Mucosa of descending colon (tissue), 3 donors: ENCODE measurements at regions of chr1 and their contacts with region 1.

Region 1: GRCh38 chr1:25796811-25797458 is 3.1 kb upstream of the SELENON start:
- DNase-seq: peak; percentile 87 to 96 (median 92)
- ATAC-seq: peak; percentile 76
- H3K4me3 ChIP-seq: no peak overlapping the region
- H3K4me1 ChIP-seq: no peaks in the 10 kb centered on the region
- CTCF ChIP-seq: peak; percentile 62

Region 2: GRCh38 chr1:25216123-25216522 is 580.8 kb before region 1 on chr1:
- intact Hi-C with region 1: no loop called
- DNase-seq: no peak
- ATAC-seq: no peak
- H3K4me3 ChIP-seq: no peak overlapping the region
- H3K4me1 ChIP-seq: peaks cover 2% of the 10 kb centered on the region
- CTCF ChIP-seq: no peak

Region 3: GRCh38 chr1:25608488-25609178 is 188.3 kb before region 1 on chr1:
- intact Hi-C with region 1: loop called (anchors 5 to 10 kb)
- DNase-seq: peak; percentile 86 to 94 (median 86)
- ATAC-seq: peak; percentile 96
- H3K4me3 ChIP-seq: no peak overlapping the region
- H3K4me1 ChIP-seq: no peaks in the 10 kb centered on the region
- CTCF ChIP-seq: peak; percentile 59

Region 4: GRCh38 chr1:25616095-25616986 is 180.6 kb before region 1 on chr1 and contains the start of gene MAN1C1:
- intact Hi-C with region 1: loop called in 1 of 2 experiments (anchors 10 kb)
- DNase-seq: peak; percentile 82 to 89 (median 89)
- ATAC-seq: peak; percentile 93
- H3K4me3 ChIP-seq: peak within 1 kb of the TSS; percentile 36
- H3K4me1 ChIP-seq: peaks cover 17% of the 10 kb centered on the region
- CTCF ChIP-seq: peak; percentile 16
- total RNA-seq, gene MAN1C1: 2.5 to 22.0 (median 6.1) TPM

Region 5: DNA sequence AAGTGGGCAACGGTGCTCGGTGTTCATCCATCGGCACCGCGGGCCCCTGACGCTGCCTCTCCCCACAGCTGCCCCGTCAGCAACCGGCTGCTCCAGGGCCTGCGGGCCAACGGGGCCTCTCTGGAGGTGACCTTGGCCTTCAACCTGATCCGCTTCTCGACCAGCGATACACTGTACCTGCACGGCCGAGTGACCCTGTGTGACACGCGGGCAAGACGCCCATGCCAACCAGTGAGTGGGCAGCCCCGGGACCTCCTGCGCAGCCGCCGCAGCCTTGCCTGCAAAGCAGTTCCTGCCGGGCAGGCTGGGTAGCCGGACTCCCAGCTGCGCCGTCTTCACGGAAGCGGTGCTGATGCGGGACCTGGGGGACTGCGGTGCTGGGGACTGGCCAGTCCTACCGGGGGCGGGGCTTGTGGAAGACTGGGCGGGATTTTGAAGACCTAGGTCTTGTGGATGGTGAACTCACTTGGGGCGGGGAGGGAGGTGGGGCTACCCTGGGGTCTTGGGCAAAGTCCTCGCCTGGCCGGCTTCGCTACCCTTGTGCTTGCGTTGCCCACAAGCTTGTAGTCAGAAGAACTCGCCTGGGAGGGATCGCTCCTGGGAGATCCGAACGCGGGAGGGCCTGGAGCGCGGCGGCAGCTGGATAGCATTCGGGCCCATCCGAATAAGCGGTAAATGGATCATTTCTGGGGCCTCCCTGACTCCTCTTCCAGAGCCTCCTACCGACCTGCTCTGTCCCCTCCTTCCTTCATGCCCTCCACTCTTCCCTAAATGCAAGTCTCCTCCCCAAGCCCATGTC is 428.3 kb after region 1 on chr1:
- intact Hi-C with region 1: no loop called
- DNase-seq: peak; percentile 82 to 87 (median 82)
- ATAC-seq: peak; percentile 83
- H3K4me3 ChIP-seq: no peak overlapping the region
- H3K4me1 ChIP-seq: peaks cover 14% of the 10 kb centered on the region
- CTCF ChIP-seq: no peak

Region 6: DNA sequence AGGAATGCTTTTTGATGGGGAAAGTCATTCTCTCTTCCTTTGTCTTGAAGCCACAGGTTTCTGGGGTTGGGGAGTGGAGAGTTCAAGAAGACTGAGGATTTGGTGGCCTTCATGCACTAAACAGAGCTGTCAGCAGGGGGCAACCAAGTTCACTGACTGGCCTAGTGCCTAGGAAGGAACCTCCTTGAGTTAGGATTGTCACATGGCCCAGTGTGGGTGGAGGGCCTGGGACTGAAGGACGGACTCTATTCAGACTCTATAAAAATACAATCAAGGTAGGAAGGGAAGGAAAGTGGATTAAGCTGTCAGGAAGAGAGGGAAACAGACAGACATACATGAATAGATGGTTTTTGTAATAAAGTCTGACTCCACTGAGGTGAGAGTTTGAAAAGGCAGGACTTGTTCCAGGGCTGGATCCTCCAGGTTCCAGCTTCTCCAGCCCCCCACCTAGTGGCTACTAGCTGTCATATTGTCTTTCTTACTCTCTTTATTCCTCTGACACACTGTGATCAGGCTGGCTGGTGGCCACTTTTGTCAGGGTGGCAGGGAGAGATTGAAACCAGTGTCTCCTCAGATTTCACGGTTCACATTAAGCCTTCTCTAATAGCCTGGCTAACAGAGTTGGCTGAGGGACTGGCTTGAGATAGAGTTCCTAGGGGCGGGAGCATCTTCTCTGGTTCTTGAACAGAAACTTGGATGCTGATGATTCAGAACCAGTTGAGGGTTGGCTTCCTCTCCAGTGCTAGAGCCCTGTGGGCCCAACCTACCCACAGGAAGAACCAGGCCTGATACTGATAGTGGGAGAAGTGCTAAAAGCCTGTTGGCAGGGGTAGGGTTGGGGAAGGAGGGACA is 478.9 kb after region 1 on chr1:
- intact Hi-C with region 1: no loop called
- DNase-seq: peak; percentile 84 to 96 (median 90)
- ATAC-seq: peak; percentile 60
- H3K4me3 ChIP-seq: no peak overlapping the region
- H3K4me1 ChIP-seq: peaks cover 49% of the 10 kb centered on the region
- CTCF ChIP-seq: peak; percentile 90